AG04450 (cell line): ENCODE measurements at regions of chr17 and their contacts with region 1.

Region 1: DNA sequence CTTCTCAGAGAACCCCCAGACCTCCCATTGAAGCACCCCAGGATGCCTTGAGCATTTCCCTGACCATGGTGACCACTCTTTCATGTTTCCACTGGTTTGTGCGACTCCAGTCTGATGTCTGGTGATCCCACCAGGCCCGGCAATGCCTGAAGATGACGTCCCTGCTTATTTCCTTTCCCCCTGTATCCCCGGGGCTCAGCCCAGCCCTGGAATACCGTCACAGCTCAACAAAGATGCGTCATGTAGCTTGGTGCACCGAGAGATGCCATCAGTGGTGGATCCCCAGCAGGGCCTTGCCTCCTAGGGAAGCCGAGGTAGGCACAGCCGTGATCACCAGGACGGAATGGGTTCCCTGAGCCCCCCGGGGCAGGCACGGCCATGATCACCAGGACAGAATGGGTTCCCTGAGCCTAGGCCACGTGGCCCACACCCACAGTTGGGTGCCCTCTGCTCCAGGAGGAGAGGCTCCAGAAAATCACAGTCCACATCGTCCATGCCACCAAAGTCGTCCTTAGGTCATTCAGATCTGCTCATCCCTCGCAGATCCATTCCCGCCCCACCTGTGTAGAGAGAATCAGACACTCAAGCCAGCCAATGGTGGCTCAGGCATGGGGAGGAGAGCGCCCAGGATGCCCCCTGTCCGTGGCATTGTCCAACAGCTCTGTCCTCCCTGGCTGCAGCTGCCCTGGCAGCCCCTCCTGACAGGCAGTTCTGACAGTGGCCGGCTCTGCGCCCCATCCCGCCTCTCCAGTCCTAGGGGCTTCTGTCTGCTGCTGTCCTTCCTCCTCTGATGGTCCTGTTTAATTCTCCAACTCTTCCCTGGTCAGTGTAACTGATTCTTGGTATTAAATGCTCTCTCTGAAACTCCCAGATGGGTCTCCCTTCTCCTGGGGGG is 261.1 kb downstream of the RBFOX3 start:
- DNase-seq: no peak
- H3K4me3 ChIP-seq: no peak overlapping the region
- H3K27ac ChIP-seq: no peak overlapping the region
- H3K27me3 ChIP-seq: peaks cover 6% of the 10 kb centered on the region
- CTCF ChIP-seq: no peak

Region 2: GRCh38 chr17:79242873-79243602 is 106.7 kb before region 1 on chr17:
- CTCF ChIA-PET with region 1: no interaction called
- POLR2A ChIA-PET with region 1: no interaction called
- DNase-seq: no peak
- H3K4me3 ChIP-seq: no peak overlapping the region
- H3K27ac ChIP-seq: no peak overlapping the region
- H3K27me3 ChIP-seq: peaks cover 4% of the 10 kb centered on the region
- CTCF ChIP-seq: no peak

Region 3: GRCh38 chr17:79322211-79323123 is 27.3 kb before region 1 on chr17:
- CTCF ChIA-PET with region 1: no interaction called
- POLR2A ChIA-PET with region 1: no interaction called
- DNase-seq: no peak
- H3K4me3 ChIP-seq: no peak overlapping the region
- H3K27ac ChIP-seq: no peak overlapping the region
- H3K27me3 ChIP-seq: peaks cover 6% of the 10 kb centered on the region
- CTCF ChIP-seq: no peak

Region 4: GRCh38 chr17:79361873-79362771 is 12.4 kb after region 1 on chr17:
- CTCF ChIA-PET with region 1: interaction called, 11 read pairs
- POLR2A ChIA-PET with region 1: no interaction called
- DNase-seq: no peak
- H3K4me3 ChIP-seq: no peak overlapping the region
- H3K27ac ChIP-seq: no peak overlapping the region
- H3K27me3 ChIP-seq: peaks cover 7% of the 10 kb centered on the region
- CTCF ChIP-seq: no peak

Region 5: GRCh38 chr17:79461041-79461440 is 111.3 kb after region 1 on chr17:
- CTCF ChIA-PET with region 1: no interaction called
- POLR2A ChIA-PET with region 1: no interaction called
- DNase-seq: no peak
- H3K4me3 ChIP-seq: no peak overlapping the region
- H3K27ac ChIP-seq: no peak overlapping the region
- H3K27me3 ChIP-seq: no peaks in the 10 kb centered on the region
- CTCF ChIP-seq: no peak

Region 6: GRCh38 chr17:79852748-79853147 is 503.0 kb after region 1 on chr17:
- CTCF ChIA-PET with region 1: no interaction called
- POLR2A ChIA-PET with region 1: no interaction called
- DNase-seq: no peak
- H3K4me3 ChIP-seq: no peak overlapping the region
- H3K27ac ChIP-seq: no peak overlapping the region
- H3K27me3 ChIP-seq: peaks cover 10% of the 10 kb centered on the region
- CTCF ChIP-seq: no peak